Caco-2 (cell line): ENCODE measurements at regions of chr2 and their contacts with region 1.

Region 1: GRCh38 chr2:196208915-196209314 is 37.5 kb upstream of the STK17B start:
- DNase-seq: peak; percentile 78 to 85
- H3K4me3 ChIP-seq: no peak overlapping the region
- H3K4me3 Mint-ChIP-seq: peak overlapping the region; percentile 51
- H3K27ac Mint-ChIP-seq: peak overlapping the region; percentile 89
- H3K4me1 ChIP-seq: peaks cover 37% of the 10 kb centered on the region
- H3K4me1 Mint-ChIP-seq: peaks cover 26% of the 10 kb centered on the region
- H3K27me3 ChIP-seq: no peaks in the 10 kb centered on the region
- H3K27me3 Mint-ChIP-seq: no peaks in the 10 kb centered on the region
- CTCF ChIP-seq: no peak

Region 2: DNA sequence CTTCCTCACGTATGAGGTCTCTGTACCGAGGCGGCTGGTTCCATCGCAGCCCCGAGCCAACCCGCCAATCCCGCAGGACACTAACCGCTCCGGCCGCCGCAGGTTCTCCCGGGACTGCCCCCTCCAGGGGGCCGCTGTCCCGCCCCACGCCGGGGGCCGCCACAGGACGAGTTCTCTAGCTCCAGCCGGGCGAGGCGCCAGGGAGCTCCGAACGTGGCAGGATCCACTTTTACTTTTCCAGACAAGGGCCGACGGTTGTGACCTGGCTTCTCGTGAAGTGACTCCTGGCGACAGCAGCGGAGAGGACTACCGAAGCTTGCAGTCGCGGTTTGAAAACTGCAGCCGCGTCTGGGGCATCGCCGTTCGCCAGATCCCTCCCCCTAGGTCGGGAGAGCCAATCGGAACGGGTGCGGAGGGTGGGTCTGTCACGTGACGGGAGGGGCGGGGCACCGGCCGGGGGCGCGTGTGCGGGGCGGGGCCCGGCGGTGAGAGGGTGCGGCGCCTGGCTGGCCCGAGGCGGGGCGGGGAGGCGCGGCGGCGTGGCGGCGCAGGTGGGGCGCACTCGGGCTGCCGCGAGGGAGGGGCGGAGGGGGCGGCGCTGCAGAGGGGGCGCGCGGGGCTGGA is 37.6 kb before region 1 on chr2 and contains the start of gene STK17B:
- CTCF ChIA-PET with region 1: no interaction called
- POLR2A ChIA-PET with region 1: no interaction called
- intact Hi-C with region 1: loop called (anchors 1 kb)
- DNase-seq: peak; percentile 96 to 97
- H3K4me3 ChIP-seq: peak within 1 kb of the TSS; percentile 96
- H3K4me3 Mint-ChIP-seq: peak within 1 kb of the TSS; percentile 97
- H3K27ac Mint-ChIP-seq: peak within 1 kb of the TSS; percentile 83
- H3K4me1 ChIP-seq: peaks cover 19% of the 10 kb centered on the region
- H3K4me1 Mint-ChIP-seq: peaks cover 30% of the 10 kb centered on the region
- H3K27me3 ChIP-seq: no peaks in the 10 kb centered on the region
- H3K27me3 Mint-ChIP-seq: no peaks in the 10 kb centered on the region
- CTCF ChIP-seq: peak in 1 of 2 experiments; percentile 0
- total RNA-seq, gene STK17B: 54.7 and 58.0 TPM in 2 replicates

Region 3: GRCh38 chr2:196233021-196233804 is 24.3 kb after region 1 on chr2:
- CTCF ChIA-PET with region 1: no interaction called
- POLR2A ChIA-PET with region 1: no interaction called
- intact Hi-C with region 1: loop called (anchors 2 kb)
- DNase-seq: peak in 1 of 2 experiments; percentile 27
- H3K4me3 ChIP-seq: no peak overlapping the region
- H3K4me3 Mint-ChIP-seq: no peak overlapping the region
- H3K27ac Mint-ChIP-seq: no peak overlapping the region
- H3K4me1 ChIP-seq: peaks cover 15% of the 10 kb centered on the region
- H3K4me1 Mint-ChIP-seq: no peaks in the 10 kb centered on the region
- H3K27me3 ChIP-seq: no peaks in the 10 kb centered on the region
- H3K27me3 Mint-ChIP-seq: no peaks in the 10 kb centered on the region
- CTCF ChIP-seq: no peak